ENCODE measurements at regions of chr3 and their contacts with region 1.

Region 1: DNA sequence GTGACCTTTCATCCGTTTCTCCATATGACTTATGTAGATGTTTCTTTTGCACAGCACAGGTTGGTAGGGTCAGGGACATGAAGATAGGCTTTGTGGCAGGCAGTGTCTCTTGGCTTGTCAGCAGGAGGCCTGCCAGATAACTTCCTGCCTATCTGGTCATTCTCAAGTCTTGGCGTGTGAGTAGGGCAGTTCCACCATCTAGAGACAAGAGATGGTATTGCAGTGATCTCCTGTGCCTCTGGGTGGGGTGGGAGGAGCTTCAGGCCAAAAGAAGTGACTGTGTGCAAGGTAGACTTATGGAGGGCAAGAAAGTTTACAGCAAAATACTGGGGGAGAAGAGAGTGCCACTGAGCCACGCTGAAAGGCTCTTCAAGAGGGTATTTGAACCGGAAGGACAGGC is 11.0 kb downstream of the TEX264 start:
- DNase-seq: peak; percentile 59 to 93 (median 71)
- ATAC-seq: peak; percentile 86
- H3K4me3 ChIP-seq: peak overlapping the region; percentile 24 to 27
- H3K4me3 Mint-ChIP-seq: peak overlapping the region; percentile 72
- H3K27ac ChIP-seq: peak overlapping the region; percentile 17 to 64
- H3K27ac Mint-ChIP-seq: peak overlapping the region; percentile 52
- H3K4me1 ChIP-seq: peaks cover 96% of the 10 kb centered on the region
- H3K4me1 Mint-ChIP-seq: peaks cover 91% of the 10 kb centered on the region
- H3K27me3 ChIP-seq: no peaks in the 10 kb centered on the region
- H3K27me3 Mint-ChIP-seq: no peaks in the 10 kb centered on the region
- CTCF ChIP-seq: peak; percentile 85

Region 2: DNA sequence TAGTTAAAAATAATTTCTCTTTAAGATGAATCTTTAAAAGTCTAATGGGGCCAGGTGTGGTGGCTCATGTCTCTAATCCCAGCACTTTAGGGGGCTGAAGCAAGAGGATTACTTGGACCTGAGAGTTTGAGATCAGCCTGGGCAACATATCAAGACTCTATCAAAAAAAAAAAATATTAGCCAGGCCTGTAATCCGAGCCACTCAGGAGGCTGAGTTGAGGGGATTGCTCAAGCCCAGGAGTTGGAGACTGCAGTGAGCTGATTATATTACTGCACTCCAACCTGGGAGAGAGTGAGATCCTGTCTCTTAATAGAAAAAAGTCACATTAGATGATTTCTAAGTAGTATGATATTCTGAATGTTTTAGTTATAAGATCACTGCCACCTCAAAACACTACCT is 619.0 kb before region 1 on chr3:
- CTCF ChIA-PET with region 1: no interaction called
- POLR2A ChIA-PET with region 1: no interaction called
- intact Hi-C with region 1: no loop called
- DNase-seq: no peak
- ATAC-seq: no peak
- H3K4me3 ChIP-seq: no peak overlapping the region
- H3K4me3 Mint-ChIP-seq: no peak overlapping the region
- H3K27ac ChIP-seq: no peak overlapping the region
- H3K27ac Mint-ChIP-seq: no peak overlapping the region
- H3K4me1 ChIP-seq: no peaks in the 10 kb centered on the region
- H3K4me1 Mint-ChIP-seq: no peaks in the 10 kb centered on the region
- H3K27me3 ChIP-seq: no peaks in the 10 kb centered on the region
- H3K27me3 Mint-ChIP-seq: no peaks in the 10 kb centered on the region
- CTCF ChIP-seq: no peak

Region 3: DNA sequence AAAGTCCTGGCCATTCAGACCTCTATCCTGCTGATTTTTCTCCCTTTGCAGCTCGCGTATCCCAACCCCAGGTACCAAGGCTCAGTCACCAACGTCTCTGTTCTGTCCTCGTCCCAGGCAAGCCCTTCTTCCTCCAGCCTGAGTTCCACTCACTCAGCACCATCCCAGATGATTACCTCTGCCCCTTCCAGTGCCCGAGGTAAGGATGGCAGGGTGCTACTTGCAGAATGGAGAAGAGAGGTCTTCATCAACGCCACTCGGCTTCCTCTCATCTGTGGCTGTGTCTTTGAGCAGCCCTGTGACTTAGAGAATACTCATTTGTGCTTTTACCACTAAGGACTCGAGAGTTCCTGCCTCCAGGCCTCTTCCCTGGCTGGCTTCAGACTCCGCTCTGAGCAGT is 319.6 kb before region 1 on chr3:
- CTCF ChIA-PET with region 1: no interaction called
- POLR2A ChIA-PET with region 1: no interaction called
- intact Hi-C with region 1: no loop called
- DNase-seq: no peak
- ATAC-seq: no peak
- H3K4me3 ChIP-seq: no peak overlapping the region
- H3K4me3 Mint-ChIP-seq: no peak overlapping the region
- H3K27ac ChIP-seq: no peak overlapping the region
- H3K27ac Mint-ChIP-seq: no peak overlapping the region
- H3K4me1 ChIP-seq: no peaks in the 10 kb centered on the region
- H3K4me1 Mint-ChIP-seq: no peaks in the 10 kb centered on the region
- H3K27me3 ChIP-seq: no peaks in the 10 kb centered on the region
- H3K27me3 Mint-ChIP-seq: no peaks in the 10 kb centered on the region
- CTCF ChIP-seq: no peak

Region 4: GRCh38 chr3:51646091-51646490 is 36.0 kb before region 1 on chr3:
- CTCF ChIA-PET with region 1: interaction called, 49 read pairs
- POLR2A ChIA-PET with region 1: no interaction called
- intact Hi-C with region 1: loop called (anchors 1 kb)
- DNase-seq: no peak
- ATAC-seq: no peak
- H3K4me3 ChIP-seq: no peak overlapping the region
- H3K4me3 Mint-ChIP-seq: no peak overlapping the region
- H3K27ac ChIP-seq: no peak overlapping the region
- H3K27ac Mint-ChIP-seq: no peak overlapping the region
- H3K4me1 ChIP-seq: no peaks in the 10 kb centered on the region
- H3K4me1 Mint-ChIP-seq: no peaks in the 10 kb centered on the region
- H3K27me3 ChIP-seq: no peaks in the 10 kb centered on the region
- H3K27me3 Mint-ChIP-seq: no peaks in the 10 kb centered on the region
- CTCF ChIP-seq: no peak

Region 5: GRCh38 chr3:51670823-51671733 is 11.0 kb before region 1 on chr3 and contains the start of gene TEX264:
- CTCF ChIA-PET with region 1: interaction called, 163 read pairs
- POLR2A ChIA-PET with region 1: interaction called, 47 read pairs
- intact Hi-C with region 1: loop called (anchors 1 kb)
- DNase-seq: peak; percentile 85 to 99 (median 95)
- ATAC-seq: peak; percentile 78
- H3K4me3 ChIP-seq: peak within 1 kb of the TSS; percentile 95 to 99
- H3K4me3 Mint-ChIP-seq: peak within 1 kb of the TSS; percentile 89
- H3K27ac ChIP-seq: peak within 1 kb of the TSS; percentile 67 to 92
- H3K27ac Mint-ChIP-seq: peak within 1 kb of the TSS; percentile 88
- H3K4me1 ChIP-seq: peaks cover 58% of the 10 kb centered on the region
- H3K4me1 Mint-ChIP-seq: peaks cover 63% of the 10 kb centered on the region
- H3K27me3 ChIP-seq: no peaks in the 10 kb centered on the region
- H3K27me3 Mint-ChIP-seq: no peaks in the 10 kb centered on the region
- CTCF ChIP-seq: no peak
- total RNA-seq, gene TEX264: 18.7 to 21.0 TPM

Region 6: GRCh38 chr3:51974963-51975851 is 293.1 kb after region 1 on chr3 and contains the start of gene ABHD14A:
- CTCF ChIA-PET with region 1: no interaction called
- POLR2A ChIA-PET with region 1: no interaction called
- intact Hi-C with region 1: loop called in 1 of 2 experiments (anchors 10 kb)
- DNase-seq: peak; percentile 35 to 89 (median 69)
- ATAC-seq: peak; percentile 66
- H3K4me3 ChIP-seq: peak within 1 kb of the TSS; percentile 86 to 92
- H3K4me3 Mint-ChIP-seq: peak within 1 kb of the TSS; percentile 88
- H3K27ac ChIP-seq: peak within 1 kb of the TSS; percentile 50 to 72
- H3K27ac Mint-ChIP-seq: peak within 1 kb of the TSS; percentile 87
- H3K4me1 ChIP-seq: peaks cover 33% of the 10 kb centered on the region
- H3K4me1 Mint-ChIP-seq: peaks cover 31% of the 10 kb centered on the region
- H3K27me3 ChIP-seq: no peaks in the 10 kb centered on the region
- H3K27me3 Mint-ChIP-seq: no peaks in the 10 kb centered on the region
- CTCF ChIP-seq: no peak
- total RNA-seq, gene ABHD14A: 6.8 to 6.9 TPM

Region 7: GRCh38 chr3:52313774-52314188 is 631.7 kb after region 1 on chr3:
- CTCF ChIA-PET with region 1: no interaction called
- POLR2A ChIA-PET with region 1: no interaction called
- intact Hi-C with region 1: no loop called
- DNase-seq: peak in 1 of 9 experiments; percentile 36
- ATAC-seq: no peak
- H3K4me3 ChIP-seq: no peak overlapping the region
- H3K4me3 Mint-ChIP-seq: no peak overlapping the region
- H3K27ac ChIP-seq: no peak overlapping the region
- H3K27ac Mint-ChIP-seq: no peak overlapping the region
- H3K4me1 ChIP-seq: peaks cover 24% of the 10 kb centered on the region
- H3K4me1 Mint-ChIP-seq: peaks cover 25% of the 10 kb centered on the region
- H3K27me3 ChIP-seq: no peaks in the 10 kb centered on the region
- H3K27me3 Mint-ChIP-seq: no peaks in the 10 kb centered on the region
- CTCF ChIP-seq: no peak